ENCODE measurements at regions of chr12 and their contacts with region 1.

Region 1: GRCh38 chr12:47742253-47742825 is 16.3 kb downstream of the RAPGEF3 start:
- DNase-seq: peak; percentile 40 to 79 (median 62)
- ATAC-seq: peak in 1 of 2 donors; percentile 26
- H3K4me3 Mint-ChIP-seq: peak overlapping the region in 2 of 10 donors; percentile 33 to 45
- H3K27ac Mint-ChIP-seq: peak overlapping the region in 1 of 10 donors; percentile 36
- H3K4me1 Mint-ChIP-seq: peaks cover 26 to 73% (median 51%) of the 10 kb centered on the region in 4 donors
- H3K27me3 Mint-ChIP-seq: no peaks in the 10 kb centered on the region

Region 2: DNA sequence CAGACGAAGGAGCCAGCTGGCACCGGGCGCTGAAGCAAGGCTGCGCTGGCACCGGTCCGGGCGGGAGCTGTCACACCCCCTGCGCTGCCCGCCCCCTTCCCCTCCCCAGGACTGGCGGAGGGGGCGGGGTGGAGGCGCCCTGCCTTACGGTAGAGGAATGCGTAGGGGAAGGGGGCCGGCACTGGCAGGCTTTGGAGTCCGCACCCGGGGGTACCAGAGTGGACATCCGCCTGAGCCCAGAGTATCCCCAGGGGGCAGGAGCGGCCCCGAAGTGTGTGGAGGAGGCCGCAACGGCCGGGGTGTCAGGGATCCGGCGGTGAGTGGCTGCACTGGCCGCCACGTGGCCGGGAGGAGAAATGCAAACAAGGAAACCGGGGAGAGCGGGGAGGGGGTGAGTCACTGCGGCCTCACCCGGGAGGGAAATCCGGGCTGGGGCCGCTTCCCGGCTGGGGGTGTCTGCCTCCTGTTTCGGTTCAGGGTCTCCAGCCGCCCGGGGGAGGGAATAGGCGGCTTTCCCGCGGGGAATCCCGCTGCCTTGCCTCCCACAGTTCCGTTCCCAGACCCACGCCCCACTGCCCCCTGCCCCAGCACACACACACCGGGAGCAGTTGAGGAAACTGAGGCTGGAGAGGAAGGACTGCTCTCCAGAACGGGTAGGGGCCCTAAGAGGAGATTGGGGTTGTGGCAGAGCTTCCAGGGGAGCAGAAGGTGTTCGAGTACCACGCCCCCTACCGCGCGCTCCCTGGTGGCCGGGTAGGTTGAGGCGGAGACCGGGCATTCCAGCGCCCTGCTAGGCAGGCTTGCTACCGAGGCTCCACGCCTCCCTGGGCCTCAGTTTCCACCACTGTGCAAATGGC is 16.7 kb after region 1 on chr12 and contains the start of gene RAPGEF3:
- POLR2A ChIA-PET with region 1: interaction called, 22 read pairs
- DNase-seq: peak; percentile 24 to 74 (median 56)
- ATAC-seq: peak; percentile 77 to 89
- H3K4me3 Mint-ChIP-seq: peak within 1 kb of the TSS; percentile 71 to 83 (median 80)
- H3K27ac Mint-ChIP-seq: peak within 1 kb of the TSS in 7 of 10 donors; percentile 1 to 73 (median 12)
- H3K4me1 Mint-ChIP-seq: peaks cover 9 to 48% (median 33%) of the 10 kb centered on the region in 4 donors
- H3K27me3 Mint-ChIP-seq: no peaks in the 10 kb centered on the region
- polyA plus RNA-seq, gene RAPGEF3: 0.08 to 0.27 (median 0.12) TPM

Region 3: GRCh38 chr12:47767216-47767724 is 24.9 kb after region 1 on chr12:
- POLR2A ChIA-PET with region 1: interaction called, 18 read pairs
- DNase-seq: peak; percentile 51 to 86 (median 60)
- ATAC-seq: peak; percentile 68 to 81
- H3K4me3 Mint-ChIP-seq: peak overlapping the region in 1 of 10 donors; percentile 46
- H3K27ac Mint-ChIP-seq: peak overlapping the region in 7 of 10 donors; percentile 3 to 88 (median 44)
- H3K4me1 Mint-ChIP-seq: peaks cover 18 to 30% (median 27%) of the 10 kb centered on the region in 4 donors
- H3K27me3 Mint-ChIP-seq: no peaks in the 10 kb centered on the region

Region 4: GRCh38 chr12:47773062-47773857 is 30.9 kb after region 1 on chr12 and contains the start of gene SLC48A1:
- POLR2A ChIA-PET with region 1: interaction called, 18 read pairs
- DNase-seq: peak; percentile 53 to 80 (median 76)
- ATAC-seq: peak; percentile 91
- H3K4me3 Mint-ChIP-seq: peak within 1 kb of the TSS; percentile 82 to 92 (median 88)
- H3K27ac Mint-ChIP-seq: peak within 1 kb of the TSS; percentile 49 to 88 (median 80)
- H3K4me1 Mint-ChIP-seq: peaks cover 9 to 33% (median 22%) of the 10 kb centered on the region in 4 donors
- H3K27me3 Mint-ChIP-seq: no peaks in the 10 kb centered on the region
- polyA plus RNA-seq, gene SLC48A1: 9.4 to 11.6 (median 9.7) TPM

Region 5: GRCh38 chr12:47837190-47838171 is 95.1 kb after region 1 on chr12:
- POLR2A ChIA-PET with region 1: interaction called, 19 read pairs
- DNase-seq: peak; percentile 33 to 77 (median 66)
- ATAC-seq: peak; percentile 24 to 29
- H3K4me3 Mint-ChIP-seq: peak overlapping the region in 4 of 10 donors; percentile 4 to 31 (median 10)
- H3K27ac Mint-ChIP-seq: peak overlapping the region; percentile 11 to 89 (median 68)
- H3K4me1 Mint-ChIP-seq: peaks cover 36 to 61% (median 57%) of the 10 kb centered on the region in 4 donors
- H3K27me3 Mint-ChIP-seq: no peaks in the 10 kb centered on the region

Measured in naive thymus-derived CD8-positive, alpha-beta T cell (primary cell).